Activated naive CD4-positive, alpha-beta T cell treated with anti-CD3 and anti-CD28 coated beads for 36 hours (primary cell): ENCODE measurements at regions of chr3 and their contacts with region 1.

Region 1: GRCh38 chr3:38346587-38347410 is at the start of gene XYLB:
- DNase-seq: peak; percentile 79
- H3K4me3 Mint-ChIP-seq: peak within 1 kb of the TSS; percentile 72
- H3K27ac Mint-ChIP-seq: no peak within 1 kb of the TSS
- H3K4me1 Mint-ChIP-seq: peaks cover 4% of the 10 kb centered on the region
- H3K27me3 Mint-ChIP-seq: peaks cover 2% of the 10 kb centered on the region
- total RNA-seq, gene XYLB: 2.5 to 2.8 TPM

Region 2: GRCh38 chr3:38334142-38335055 is 12.4 kb before region 1 on chr3:
- CTCF ChIA-PET with region 1: interaction called, 15 read pairs
- intact Hi-C with region 1: no loop called
- DNase-seq: no peak
- H3K4me3 Mint-ChIP-seq: no peak overlapping the region
- H3K27ac Mint-ChIP-seq: no peak overlapping the region
- H3K4me1 Mint-ChIP-seq: no peaks in the 10 kb centered on the region
- H3K27me3 Mint-ChIP-seq: no peaks in the 10 kb centered on the region

Region 3: DNA sequence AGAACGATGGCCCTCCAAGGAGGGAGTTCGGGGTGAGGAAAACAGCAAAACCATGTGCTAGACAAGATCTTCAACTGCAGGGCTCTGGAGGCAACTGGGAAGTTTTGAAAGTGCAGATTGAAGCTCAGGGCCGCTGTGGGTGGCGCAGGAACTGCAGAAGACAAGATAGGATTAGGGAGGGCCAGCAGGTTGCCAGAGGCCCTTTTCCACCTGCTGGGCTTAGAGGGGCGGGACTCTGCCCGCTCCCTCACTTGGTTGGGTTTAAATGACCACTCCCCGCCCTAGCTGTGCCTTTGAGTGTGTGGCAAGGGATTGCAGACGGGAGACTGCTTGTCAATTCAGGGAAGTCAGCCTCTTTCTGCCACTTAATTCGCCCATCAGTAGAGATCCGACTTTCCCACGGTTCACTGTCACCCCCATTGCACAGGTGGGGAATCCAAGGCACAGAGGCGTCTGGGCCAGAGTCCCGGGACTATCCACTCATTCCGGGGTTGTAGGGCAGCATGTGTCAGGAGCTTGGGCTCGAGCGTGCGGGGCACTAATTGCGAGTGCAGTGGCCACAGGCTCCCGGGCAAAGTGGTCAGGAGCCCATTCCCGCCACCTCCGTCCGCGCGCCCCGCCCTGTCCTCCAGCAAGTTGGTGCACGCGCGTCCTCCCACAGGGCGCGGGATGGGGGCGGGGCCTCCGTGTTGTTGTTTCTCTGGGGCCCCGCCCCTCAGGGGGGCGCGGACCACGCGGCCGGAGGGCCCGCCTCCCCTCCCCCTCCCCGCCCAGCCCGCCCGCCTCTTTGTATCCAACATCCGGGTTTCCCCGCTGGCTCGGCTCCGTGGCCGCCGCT is 106.5 kb after region 1 on chr3 and contains the start of gene ACVR2B:
- CTCF ChIA-PET with region 1: interaction called, 6 read pairs
- intact Hi-C with region 1: loop called (anchors 1 kb)
- DNase-seq: peak; percentile 74
- H3K4me3 Mint-ChIP-seq: peak within 1 kb of the TSS; percentile 96
- H3K27ac Mint-ChIP-seq: peak within 1 kb of the TSS; percentile 74
- H3K4me1 Mint-ChIP-seq: peaks cover 2% of the 10 kb centered on the region
- H3K27me3 Mint-ChIP-seq: no peaks in the 10 kb centered on the region
- total RNA-seq, gene ACVR2B: 6.5 to 6.9 TPM

Region 4: DNA sequence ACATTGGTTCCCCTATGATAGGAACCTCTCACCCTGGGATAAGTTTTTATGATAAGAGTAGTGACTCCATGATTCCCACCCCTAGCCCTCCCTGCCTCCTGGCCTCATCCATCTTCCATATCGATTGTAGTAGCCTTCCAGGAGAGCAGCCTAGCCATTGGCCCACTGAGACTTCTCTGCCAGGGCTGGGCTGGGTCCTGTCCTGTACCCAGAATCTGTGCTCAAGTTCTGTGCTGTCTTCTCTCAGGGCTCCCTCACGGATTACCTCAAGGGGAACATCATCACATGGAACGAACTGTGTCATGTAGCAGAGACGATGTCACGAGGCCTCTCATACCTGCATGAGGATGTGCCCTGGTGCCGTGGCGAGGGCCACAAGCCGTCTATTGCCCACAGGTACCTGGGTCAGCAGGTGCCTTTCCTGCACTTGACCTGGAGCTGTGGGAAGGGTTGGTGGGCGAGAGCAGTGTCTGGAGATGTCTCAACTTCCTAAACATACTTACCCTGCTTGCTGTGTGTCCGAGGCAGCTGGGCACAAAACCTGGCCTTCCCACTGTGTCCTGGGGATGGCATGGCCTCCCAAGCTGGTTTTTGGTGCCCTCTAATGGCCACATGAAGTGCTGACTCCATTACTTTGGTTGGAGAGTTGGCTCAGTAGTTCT is 132.8 kb after region 1 on chr3:
- CTCF ChIA-PET with region 1: interaction called, 48 read pairs
- intact Hi-C with region 1: loop called (anchors 1 kb)
- DNase-seq: peak; percentile 63
- H3K4me3 Mint-ChIP-seq: no peak overlapping the region
- H3K27ac Mint-ChIP-seq: no peak overlapping the region
- H3K4me1 Mint-ChIP-seq: no peaks in the 10 kb centered on the region
- H3K27me3 Mint-ChIP-seq: no peaks in the 10 kb centered on the region

Region 5: DNA sequence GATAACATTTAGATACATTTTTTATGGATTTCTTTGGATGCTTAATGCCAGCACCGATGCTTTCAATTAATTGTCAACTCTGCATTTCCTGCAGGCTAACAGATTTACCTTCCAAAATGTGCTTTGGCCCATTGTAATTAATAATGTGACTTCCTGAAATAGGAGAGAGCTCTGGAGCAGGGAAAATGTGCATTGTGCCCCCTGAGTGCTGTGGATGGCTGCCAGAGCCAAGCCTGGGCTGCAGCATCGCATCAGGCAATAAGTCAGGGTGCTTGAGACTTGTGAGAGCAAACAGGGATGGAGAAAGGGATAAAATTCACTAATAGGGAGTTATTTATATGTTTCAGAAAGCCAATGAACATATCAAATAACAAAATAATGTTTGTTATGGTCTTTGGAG is 1254.4 kb after region 1 on chr3:
- CTCF ChIA-PET with region 1: no interaction called
- intact Hi-C with region 1: no loop called
- DNase-seq: no peak
- H3K4me3 Mint-ChIP-seq: no peak overlapping the region
- H3K27ac Mint-ChIP-seq: no peak overlapping the region
- H3K4me1 Mint-ChIP-seq: no peaks in the 10 kb centered on the region
- H3K27me3 Mint-ChIP-seq: peaks cover 8% of the 10 kb centered on the region